ENCODE measurements at regions of chr7 and their contacts with region 1.

Region 1: DNA sequence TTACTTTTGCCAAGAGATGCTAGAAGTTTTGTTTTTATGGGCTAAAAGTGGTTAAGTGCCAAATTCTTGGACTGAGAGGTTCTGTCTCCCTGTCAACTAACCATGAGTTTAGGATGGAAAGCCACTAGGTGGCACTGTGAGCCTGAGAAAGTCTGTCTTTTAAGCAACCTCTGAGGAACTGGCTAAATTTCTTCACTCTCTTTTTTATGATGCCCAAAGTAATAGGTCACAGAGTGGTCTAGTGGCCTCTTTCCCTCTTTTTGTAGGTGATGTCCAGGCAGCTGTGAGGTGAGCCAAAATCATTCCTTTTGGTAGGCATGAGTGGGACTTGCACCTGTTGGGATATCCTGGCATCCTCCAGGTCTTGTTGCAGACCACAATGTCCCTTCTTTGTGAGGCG is 56.8 kb downstream of the SND1 start:
- DNase-seq: peak; percentile 73
- H3K4me3 Mint-ChIP-seq: no peak overlapping the region
- H3K27ac Mint-ChIP-seq: no peak overlapping the region
- H3K4me1 Mint-ChIP-seq: peaks cover 20% of the 10 kb centered on the region
- H3K27me3 Mint-ChIP-seq: no peaks in the 10 kb centered on the region
- CTCF ChIP-seq: peak; percentile 76

Region 2: DNA sequence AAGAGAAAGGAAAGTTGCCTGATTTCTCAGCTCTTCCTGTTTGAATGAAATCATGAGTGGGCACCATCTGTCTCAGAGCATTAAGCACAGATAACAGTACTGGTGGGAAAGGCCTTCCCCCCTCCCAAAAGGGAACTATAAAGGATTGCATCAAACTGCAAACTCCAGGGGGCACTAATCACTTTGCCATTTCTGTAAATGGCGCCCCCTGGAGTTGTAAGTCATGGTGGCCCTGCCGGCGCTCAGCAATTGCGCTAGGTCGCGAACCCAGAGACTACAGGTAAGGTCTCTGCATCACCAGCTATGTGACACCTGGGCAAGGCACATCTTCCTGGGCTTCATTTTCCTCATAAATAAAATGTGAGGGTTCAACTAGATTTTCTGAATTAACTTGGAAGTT is 311.4 kb after region 1 on chr7:
- CTCF ChIA-PET with region 1: no interaction called
- intact Hi-C with region 1: loop called (anchors 10 kb)
- DNase-seq: no peak
- H3K4me3 Mint-ChIP-seq: no peak overlapping the region
- H3K27ac Mint-ChIP-seq: no peak overlapping the region
- H3K4me1 Mint-ChIP-seq: peaks cover 45% of the 10 kb centered on the region
- H3K27me3 Mint-ChIP-seq: no peaks in the 10 kb centered on the region
- CTCF ChIP-seq: peak; percentile 28

Measured in Calu3 (cell line).